KBM-7 (cell line): ENCODE measurements at regions of chr4 and their contacts with region 1.

Region 1: DNA sequence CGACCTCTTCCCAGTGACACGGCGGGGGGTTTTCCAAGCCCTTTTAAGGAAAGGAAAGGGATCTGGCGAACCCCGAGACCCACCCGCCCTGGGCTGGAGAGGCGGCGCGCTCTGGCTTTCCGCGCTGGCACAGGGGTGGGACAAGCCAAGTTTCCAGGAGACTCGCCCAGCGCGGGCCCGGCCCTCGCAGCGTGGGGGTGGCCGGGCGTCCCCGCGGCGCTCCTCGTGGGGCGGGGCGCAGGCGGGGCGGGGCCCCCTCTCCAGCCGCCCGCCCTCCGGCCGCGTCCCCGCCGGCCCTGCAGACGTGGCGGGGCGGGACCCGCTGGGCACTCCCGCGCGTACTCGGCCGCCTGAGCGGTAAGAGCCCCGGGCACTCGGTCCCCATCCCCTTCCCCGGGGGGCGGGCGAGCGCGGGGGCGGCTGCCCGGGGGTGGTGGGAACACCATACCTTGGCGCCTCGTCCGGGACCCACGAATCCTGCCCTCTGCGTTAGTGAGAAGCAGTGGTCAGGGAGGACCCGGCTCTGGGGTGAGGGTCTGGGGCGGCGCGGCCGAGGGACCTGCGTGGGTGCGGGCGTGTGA is at the start of gene FAM114A1:
- DNase-seq: no peak

Region 2: GRCh38 chr4:38730830-38731646 is 136.5 kb before region 1 on chr4:
- in situ Hi-C with region 1: no loop called
- DNase-seq: peak; percentile 93

Region 3: GRCh38 chr4:38759113-38759789 is 108.3 kb before region 1 on chr4:
- in situ Hi-C with region 1: loop called (anchors 25 kb)
- DNase-seq: peak; percentile 83